Breast epithelium (tissue), 4 donors: ENCODE measurements at regions of chr2 and their contacts with region 1.

Region 1: GRCh38 chr2:172361360-172361759 is 66.0 kb upstream of the ITGA6 start:
- DNase-seq: no peak
- H3K4me3 ChIP-seq: no peak overlapping the region
- H3K27ac ChIP-seq: no peak overlapping the region
- H3K4me1 ChIP-seq: no peaks in the 10 kb centered on the region
- H3K27me3 ChIP-seq: no peaks in the 10 kb centered on the region
- CTCF ChIP-seq: no peak
- POLR2A ChIP-seq: no peak

Region 2: DNA sequence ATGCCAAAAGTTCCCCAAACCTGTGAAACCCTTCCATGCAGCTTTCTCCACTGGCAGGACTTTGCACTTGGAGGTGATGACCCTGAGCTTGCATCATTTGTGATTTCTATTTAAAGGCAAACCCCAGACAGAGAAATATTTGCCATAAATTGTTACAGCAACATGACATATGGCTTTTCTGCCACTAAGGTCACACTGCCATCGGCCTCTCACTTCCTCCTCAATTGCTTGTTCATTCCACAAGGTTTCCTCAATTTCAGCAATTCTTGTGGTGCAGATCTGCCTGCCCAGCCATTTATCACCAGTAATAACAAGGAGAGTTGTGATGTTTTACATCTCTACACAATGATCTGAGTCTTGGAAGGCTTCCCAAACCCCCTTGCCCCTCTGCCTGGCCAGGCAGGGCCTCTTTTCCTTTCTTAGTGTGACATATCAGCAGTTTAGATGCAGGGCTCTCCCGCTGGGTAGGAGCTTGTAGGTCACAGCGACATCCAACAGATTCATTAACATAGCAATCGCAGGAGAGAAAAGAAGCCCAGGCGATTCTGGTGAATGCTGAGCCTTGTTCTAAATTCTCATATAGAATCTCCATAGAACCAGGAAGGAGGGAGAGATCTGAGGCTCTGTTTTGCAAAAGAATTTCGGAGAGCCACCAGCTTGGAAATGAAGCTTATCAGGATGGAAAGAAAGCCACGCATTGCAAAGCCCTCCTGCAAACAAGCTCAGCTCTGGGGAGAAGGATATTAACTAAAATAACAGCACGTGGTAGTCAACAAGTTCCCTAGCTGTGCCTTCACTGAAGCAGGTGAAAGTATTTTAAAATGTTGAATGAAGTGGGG is 19.3 kb after region 1 on chr2:
- intact Hi-C with region 1: loop called (anchors 1 kb)
- DNase-seq: no peak
- H3K4me3 ChIP-seq: no peak overlapping the region
- H3K27ac ChIP-seq: no peak overlapping the region
- H3K4me1 ChIP-seq: no peaks in the 10 kb centered on the region
- H3K27me3 ChIP-seq: no peaks in the 10 kb centered on the region
- CTCF ChIP-seq: no peak
- POLR2A ChIP-seq: no peak

Region 3: GRCh38 chr2:172465417-172466334 is 104.3 kb after region 1 on chr2:
- intact Hi-C with region 1: no loop called
- DNase-seq: peak; percentile 69 to 75
- H3K4me3 ChIP-seq: peak overlapping the region in 2 of 3 donors; percentile 14 to 35
- H3K27ac ChIP-seq: peak overlapping the region; percentile 25 to 59
- H3K4me1 ChIP-seq: peaks cover 0 to 13% of the 10 kb centered on the region in 2 donors
- H3K27me3 ChIP-seq: peaks cover 0 to 3% of the 10 kb centered on the region in 2 donors
- CTCF ChIP-seq: peak; percentile 85 to 93 (median 89)
- POLR2A ChIP-seq: no peak